Activated B cell treated with CpG ODN at 0.5 μM for 24 hours (primary cell): ENCODE measurements at regions of chr6 and their contacts with region 1.

Region 1: GRCh38 chr6:18387061-18387721 is at the start of gene RNF144B:
- DNase-seq: peak; percentile 64
- ATAC-seq: peak; percentile 94
- H3K4me3 Mint-ChIP-seq: peak within 1 kb of the TSS; percentile 95
- H3K27ac Mint-ChIP-seq: peak within 1 kb of the TSS; percentile 80
- H3K4me1 Mint-ChIP-seq: peaks cover 48% of the 10 kb centered on the region
- H3K27me3 Mint-ChIP-seq: no peaks in the 10 kb centered on the region
- CTCF ChIP-seq: no peak
- total RNA-seq, gene RNF144B: 12.6 and 13.5 TPM in 2 replicates

Region 2: GRCh38 chr6:17599885-17600526 is 787.2 kb before region 1 on chr6 and contains the start of gene FAM8A1:
- CTCF ChIA-PET with region 1: no interaction called
- POLR2A ChIA-PET with region 1: interaction called, 6 read pairs
- intact Hi-C with region 1: loop called (anchors 5 kb)
- DNase-seq: peak; percentile 88
- ATAC-seq: peak; percentile 91
- H3K4me3 Mint-ChIP-seq: peak within 1 kb of the TSS; percentile 80
- H3K27ac Mint-ChIP-seq: peak within 1 kb of the TSS; percentile 78
- H3K4me1 Mint-ChIP-seq: peaks cover 11% of the 10 kb centered on the region
- H3K27me3 Mint-ChIP-seq: no peaks in the 10 kb centered on the region
- CTCF ChIP-seq: no peak
- total RNA-seq, gene FAM8A1: 2.6 and 3.0 TPM in 2 replicates

Region 3: DNA sequence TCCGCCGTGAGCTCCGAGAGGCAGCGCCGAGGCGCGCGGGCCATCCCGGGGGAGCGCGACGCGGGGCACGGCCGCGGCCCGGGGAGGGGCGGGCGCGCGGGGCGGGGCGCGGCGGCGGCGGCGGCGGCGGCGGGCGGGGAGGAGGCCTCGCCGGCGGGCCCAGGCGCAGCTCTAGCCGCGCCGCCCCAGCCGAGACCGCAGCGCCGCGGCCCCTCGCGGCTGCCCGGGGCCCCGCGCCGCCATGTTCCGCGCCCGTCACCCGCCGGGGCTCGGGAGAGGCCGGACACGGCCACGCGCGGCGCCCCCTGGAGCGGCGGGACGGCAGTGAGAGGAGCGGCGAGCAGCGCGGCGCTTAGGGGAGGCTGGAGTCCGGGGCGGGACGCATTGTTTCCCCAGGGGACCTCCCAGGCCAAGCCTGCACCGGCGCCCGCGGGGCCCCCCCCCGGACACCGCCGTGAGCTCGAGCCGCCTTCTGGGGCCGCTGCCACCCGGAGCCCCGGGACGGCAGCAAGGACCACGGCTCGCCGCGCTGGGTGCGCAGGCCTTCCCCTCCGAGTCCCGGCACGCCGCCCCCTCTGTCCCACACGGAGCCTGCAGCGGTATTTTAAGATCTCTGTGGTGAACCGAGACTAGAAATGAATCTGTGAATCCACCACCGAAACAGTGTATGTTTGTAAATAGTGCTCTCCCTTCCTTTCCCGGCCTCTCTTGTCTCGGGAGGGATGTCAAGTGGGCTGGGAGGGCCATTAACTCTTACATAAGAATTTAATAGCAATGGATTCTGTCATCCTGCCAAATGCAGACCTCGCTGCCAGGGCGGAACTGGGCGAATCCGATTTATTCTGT is 399.4 kb before region 1 on chr6 and contains the start of gene KIF13A:
- CTCF ChIA-PET with region 1: no interaction called
- POLR2A ChIA-PET with region 1: no interaction called
- intact Hi-C with region 1: loop called (anchors 5 kb)
- DNase-seq: peak; percentile 72
- ATAC-seq: peak; percentile 76
- H3K4me3 Mint-ChIP-seq: peak within 1 kb of the TSS; percentile 91
- H3K27ac Mint-ChIP-seq: peak within 1 kb of the TSS; percentile 88
- H3K4me1 Mint-ChIP-seq: peaks cover 32% of the 10 kb centered on the region
- H3K27me3 Mint-ChIP-seq: no peaks in the 10 kb centered on the region
- CTCF ChIP-seq: no peak
- total RNA-seq, gene KIF13A: 13.1 and 14.1 TPM in 2 replicates

Region 4: DNA sequence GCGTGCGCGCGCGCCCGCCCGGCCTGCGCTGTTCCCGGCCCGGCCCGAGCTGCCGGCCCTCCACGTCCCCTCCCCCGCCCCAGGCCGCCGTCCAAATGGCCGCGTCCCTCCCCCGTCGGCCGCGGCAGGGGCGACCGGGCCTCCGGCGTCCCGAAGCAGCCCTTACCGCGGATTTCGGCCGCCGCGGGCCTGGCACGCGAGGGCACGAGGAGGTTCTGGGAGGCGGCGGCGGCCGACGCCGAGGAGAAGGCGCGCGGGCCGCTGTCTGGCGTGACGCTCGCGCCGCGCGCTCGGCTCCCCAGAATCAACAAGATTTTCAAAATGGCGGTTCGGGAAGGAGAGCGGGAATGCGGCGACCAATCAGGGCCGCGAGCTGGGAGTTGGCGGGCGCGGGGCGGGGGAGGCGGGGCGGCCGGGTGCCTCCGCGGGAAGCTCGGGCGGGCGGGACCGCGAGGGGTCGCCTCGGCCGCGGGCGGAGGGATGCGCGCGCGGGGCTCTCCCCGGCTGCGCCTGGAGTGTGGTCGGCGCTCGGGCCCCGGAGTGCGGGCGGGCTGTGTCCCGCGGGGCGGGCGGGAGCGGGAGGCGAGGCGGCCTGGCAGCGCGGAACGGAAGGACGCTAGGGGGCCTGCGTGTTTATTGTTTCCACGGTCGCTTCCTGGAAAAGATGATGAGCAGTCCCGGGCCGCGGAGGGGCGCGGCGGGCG is 122.8 kb before region 1 on chr6 and contains the start of gene DEK:
- CTCF ChIA-PET with region 1: no interaction called
- POLR2A ChIA-PET with region 1: interaction called, 3 read pairs
- intact Hi-C with region 1: loop called (anchors 5 kb)
- DNase-seq: peak; percentile 81
- ATAC-seq: peak; percentile 62
- H3K4me3 Mint-ChIP-seq: peak within 1 kb of the TSS; percentile 89
- H3K27ac Mint-ChIP-seq: peak within 1 kb of the TSS; percentile 94
- H3K4me1 Mint-ChIP-seq: peaks cover 48% of the 10 kb centered on the region
- H3K27me3 Mint-ChIP-seq: no peaks in the 10 kb centered on the region
- CTCF ChIP-seq: no peak
- total RNA-seq, gene DEK: 80.8 and 81.9 TPM in 2 replicates

Region 5: DNA sequence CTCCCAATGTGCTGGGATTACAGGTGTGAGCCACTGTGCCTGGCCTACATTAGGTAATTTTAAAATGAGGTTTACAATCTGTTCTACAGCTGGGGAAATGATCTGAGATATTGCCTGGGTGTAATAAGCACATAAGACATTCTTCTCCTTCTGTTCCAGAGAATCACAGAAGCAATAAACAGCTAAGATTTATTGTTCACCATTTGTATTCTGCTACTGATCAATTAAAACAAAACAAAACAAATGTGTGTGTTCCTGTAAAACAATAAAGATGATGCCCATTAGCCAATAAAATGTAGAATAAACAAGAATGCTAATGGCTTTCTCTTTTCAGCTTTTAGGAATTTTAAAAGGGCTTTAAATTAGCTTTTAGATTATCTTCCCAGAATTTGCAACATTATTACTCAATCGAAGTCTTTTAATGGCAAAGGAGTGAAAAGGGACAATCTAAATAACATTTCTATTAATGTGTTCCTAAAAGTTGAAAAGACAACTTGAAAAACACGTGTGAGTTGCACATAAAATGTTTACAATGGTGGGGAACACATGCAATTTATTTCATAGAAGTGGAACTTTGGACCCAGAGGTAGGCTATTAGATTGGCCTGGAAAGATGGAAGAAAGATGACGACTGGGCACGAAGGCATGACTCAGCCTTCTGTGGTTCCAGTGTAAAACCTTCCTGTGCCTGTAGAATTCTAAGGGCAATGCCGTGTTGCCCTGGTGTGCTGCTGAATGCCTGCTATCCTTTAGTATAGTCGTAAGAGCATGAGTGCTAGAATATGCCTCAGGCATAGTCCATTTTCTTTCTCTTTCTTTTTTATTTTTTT is 93.9 kb before region 1 on chr6:
- CTCF ChIA-PET with region 1: no interaction called
- POLR2A ChIA-PET with region 1: no interaction called
- intact Hi-C with region 1: no loop called
- DNase-seq: no peak
- ATAC-seq: no peak
- H3K4me3 Mint-ChIP-seq: no peak overlapping the region
- H3K27ac Mint-ChIP-seq: no peak overlapping the region
- H3K4me1 Mint-ChIP-seq: no peaks in the 10 kb centered on the region
- H3K27me3 Mint-ChIP-seq: peaks cover 18% of the 10 kb centered on the region
- CTCF ChIP-seq: no peak

Region 6: GRCh38 chr6:18330548-18331081 is 56.6 kb before region 1 on chr6:
- CTCF ChIA-PET with region 1: interaction called, 4 read pairs
- POLR2A ChIA-PET with region 1: interaction called, 49 read pairs
- intact Hi-C with region 1: loop called (anchors 1 kb)
- DNase-seq: peak; percentile 24
- ATAC-seq: peak; percentile 62
- H3K4me3 Mint-ChIP-seq: peak overlapping the region; percentile 29
- H3K27ac Mint-ChIP-seq: peak overlapping the region; percentile 84
- H3K4me1 Mint-ChIP-seq: peaks cover 53% of the 10 kb centered on the region
- H3K27me3 Mint-ChIP-seq: no peaks in the 10 kb centered on the region
- CTCF ChIP-seq: no peak

Region 7: DNA sequence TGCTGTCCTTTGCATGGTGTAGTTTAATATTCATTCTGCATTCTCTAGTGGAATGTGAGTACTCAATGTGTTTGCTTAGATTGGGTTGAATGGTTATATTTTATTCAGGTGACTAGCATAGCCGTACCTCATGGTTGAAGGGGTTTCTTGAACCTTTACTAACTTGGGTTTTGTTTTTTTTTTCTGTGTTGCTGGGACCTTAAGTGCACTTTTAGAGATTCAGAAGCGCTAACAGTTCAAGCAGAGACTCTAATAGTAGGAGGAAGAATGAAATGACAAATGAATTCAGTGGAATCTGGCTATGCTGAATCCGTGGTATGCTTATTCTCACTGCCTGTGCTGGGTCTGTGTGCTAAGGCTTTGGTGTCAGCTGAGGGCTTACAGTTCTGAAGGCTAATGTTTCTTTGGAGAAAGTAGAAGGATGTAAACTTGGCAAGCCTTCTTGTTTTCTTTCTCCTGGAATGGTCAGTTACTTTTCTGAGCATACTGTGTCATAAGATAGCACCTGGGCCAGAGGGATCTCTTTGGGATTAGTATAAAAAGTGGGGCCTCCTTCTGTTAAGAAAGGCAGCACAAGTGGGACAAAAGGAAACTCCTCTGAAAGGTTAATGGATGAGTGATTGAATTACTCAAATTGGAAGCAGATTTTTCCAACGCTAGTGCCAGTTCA is 28.6 kb after region 1 on chr6:
- CTCF ChIA-PET with region 1: interaction called, 3 read pairs
- POLR2A ChIA-PET with region 1: interaction called, 12 read pairs
- intact Hi-C with region 1: no loop called
- DNase-seq: no peak
- ATAC-seq: no peak
- H3K4me3 Mint-ChIP-seq: no peak overlapping the region
- H3K27ac Mint-ChIP-seq: no peak overlapping the region
- H3K4me1 Mint-ChIP-seq: peaks cover 41% of the 10 kb centered on the region
- H3K27me3 Mint-ChIP-seq: no peaks in the 10 kb centered on the region
- CTCF ChIP-seq: no peak

Region 8: DNA sequence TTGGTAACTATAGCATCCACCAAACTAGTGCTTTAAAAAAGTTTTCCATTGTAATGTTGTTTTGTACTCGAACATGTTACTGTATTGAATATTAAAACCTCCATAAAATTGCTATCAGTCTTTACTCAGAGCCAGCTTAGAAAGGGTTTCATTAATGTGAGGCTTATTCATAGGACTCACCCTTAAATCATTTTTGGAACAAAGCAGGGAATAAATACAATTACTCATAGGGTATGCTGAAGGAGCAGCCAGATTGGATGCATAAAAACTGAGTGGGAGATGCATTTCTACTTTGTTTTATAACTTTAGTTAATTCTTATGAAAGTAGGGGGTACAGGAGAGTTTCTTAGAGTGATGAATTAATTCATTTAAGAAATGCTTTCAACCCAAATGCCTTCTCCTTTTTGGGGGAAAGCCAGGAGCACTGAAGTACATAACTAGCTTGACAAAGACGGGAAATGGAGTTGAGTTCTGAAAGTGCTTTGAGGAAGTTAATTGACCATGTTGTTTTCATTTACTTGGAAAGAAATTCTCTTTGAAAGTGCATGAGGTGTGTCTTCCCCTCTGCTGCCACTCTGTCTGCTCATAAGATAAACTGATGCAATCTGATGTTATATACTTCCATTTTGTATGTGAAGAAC is 90.2 kb after region 1 on chr6:
- CTCF ChIA-PET with region 1: interaction called, 3 read pairs
- POLR2A ChIA-PET with region 1: interaction called, 4 read pairs
- intact Hi-C with region 1: loop called (anchors 5 kb)
- DNase-seq: no peak
- ATAC-seq: peak; percentile 80
- H3K4me3 Mint-ChIP-seq: peak overlapping the region; percentile 55
- H3K27ac Mint-ChIP-seq: peak overlapping the region; percentile 82
- H3K4me1 Mint-ChIP-seq: peaks cover 46% of the 10 kb centered on the region
- H3K27me3 Mint-ChIP-seq: no peaks in the 10 kb centered on the region
- CTCF ChIP-seq: no peak